ENCODE measurements at regions of chr19 and their contacts with region 1.

Region 1: GRCh38 chr19:6048808-6049405 is 61.4 kb downstream of the RFX2 start:
- DNase-seq: peak; percentile 74 to 84
- ATAC-seq: peak; percentile 86 to 100 (median 98)
- H3K4me3 ChIP-seq: no peak overlapping the region
- H3K27ac ChIP-seq: no peak overlapping the region
- H3K4me1 ChIP-seq: peaks cover 2% of the 10 kb centered on the region
- H3K27me3 ChIP-seq: no peaks in the 10 kb centered on the region
- CTCF ChIP-seq: peak; percentile 88

Region 2: DNA sequence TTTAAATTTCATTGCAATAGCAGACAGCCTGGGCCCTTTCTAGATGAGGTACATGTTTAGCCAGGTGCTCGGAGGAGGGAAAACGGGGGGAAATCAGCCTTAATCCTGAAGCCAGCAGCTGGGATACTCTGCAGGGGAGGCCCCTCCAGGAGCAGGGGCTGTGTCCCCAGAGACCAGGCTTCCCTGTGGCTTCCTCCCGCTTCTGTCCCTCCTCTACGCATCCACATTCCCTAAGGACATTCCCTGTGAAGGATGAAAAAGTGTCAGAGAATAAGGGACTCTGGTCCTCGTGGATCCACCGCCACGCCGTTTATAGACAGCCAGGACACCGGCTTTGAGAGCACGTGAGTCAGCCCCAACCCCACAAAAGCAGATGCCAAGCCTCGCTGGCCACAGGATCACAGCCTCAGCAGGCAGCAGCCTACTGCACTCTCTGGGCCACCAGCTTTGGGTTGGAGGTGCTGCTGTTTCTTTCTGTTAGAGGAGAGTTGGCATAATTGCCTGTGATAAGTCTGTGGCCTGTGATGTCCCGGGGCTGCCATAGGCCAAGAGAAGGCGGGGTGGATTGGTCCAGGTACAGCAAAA is 34.3 kb before region 1 on chr19:
- intact Hi-C with region 1: no loop called
- DNase-seq: peak in 1 of 2 donors; percentile 34
- ATAC-seq: no peak
- H3K4me3 ChIP-seq: no peak overlapping the region
- H3K27ac ChIP-seq: no peak overlapping the region
- H3K4me1 ChIP-seq: no peaks in the 10 kb centered on the region
- H3K27me3 ChIP-seq: peaks cover 0 to 4% (median 0%) of the 10 kb centered on the region in 3 donors
- CTCF ChIP-seq: no peak

Region 3: GRCh38 chr19:6125571-6125989 is 76.7 kb after region 1 on chr19:
- intact Hi-C with region 1: loop called (anchors 1 kb)
- DNase-seq: peak in 1 of 2 donors; percentile 35
- ATAC-seq: peak in 3 of 4 donors; percentile 80 to 84 (median 81)
- H3K4me3 ChIP-seq: no peak overlapping the region
- H3K27ac ChIP-seq: no peak overlapping the region
- H3K4me1 ChIP-seq: no peaks in the 10 kb centered on the region
- H3K27me3 ChIP-seq: peaks cover 0 to 5% (median 0%) of the 10 kb centered on the region in 3 donors
- CTCF ChIP-seq: peak; percentile 90

Region 4: DNA sequence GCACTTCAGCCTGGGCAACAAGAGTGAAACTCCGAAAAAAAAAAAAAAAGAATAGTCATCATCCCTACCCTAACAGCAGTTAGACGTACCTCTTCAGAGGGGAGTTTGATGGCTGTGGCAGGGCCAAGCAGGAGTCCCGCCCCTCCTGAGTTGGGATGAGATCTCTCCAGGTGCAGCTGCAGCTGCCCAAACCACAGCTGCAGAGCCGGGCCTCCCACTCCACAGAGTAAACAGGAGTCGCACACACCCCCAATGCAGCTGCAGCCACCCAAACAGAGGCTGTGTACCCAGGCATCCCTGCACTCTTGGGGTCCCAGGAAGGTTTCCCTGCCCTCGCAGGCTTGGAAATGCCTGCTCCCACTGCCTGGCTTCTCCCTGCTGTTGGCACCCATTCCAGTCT is 248.3 kb after region 1 on chr19:
- intact Hi-C with region 1: loop called in 1 of 2 experiments (anchors 5 kb)
- DNase-seq: no peak
- ATAC-seq: no peak
- H3K4me3 ChIP-seq: no peak overlapping the region
- H3K27ac ChIP-seq: no peak overlapping the region
- H3K4me1 ChIP-seq: no peaks in the 10 kb centered on the region
- H3K27me3 ChIP-seq: peaks cover 0 to 4% (median 0%) of the 10 kb centered on the region in 3 donors
- CTCF ChIP-seq: no peak

Measured in psoas muscle (tissue), 8 donors.